Transverse colon (tissue), 4 donors: ENCODE measurements at regions of chr12 and their contacts with region 1.

Region 1: GRCh38 chr12:11839091-11839641 is 189.7 kb downstream of the ETV6 start:
- DNase-seq: peak; percentile 42
- H3K4me3 ChIP-seq: no peak overlapping the region
- H3K27ac ChIP-seq: peak overlapping the region; percentile 71 to 86 (median 82)
- H3K4me1 ChIP-seq: peaks cover 25 to 89% (median 53%) of the 10 kb centered on the region in 4 donors
- H3K27me3 ChIP-seq: no peaks in the 10 kb centered on the region
- CTCF ChIP-seq: no peak
- EP300 ChIP-seq: no peak
- POLR2A ChIP-seq: no peak

Region 2: GRCh38 chr12:11785712-11786111 is 53.5 kb before region 1 on chr12:
- in situ Hi-C with region 1: no loop called
- intact Hi-C with region 1: no loop called
- DNase-seq: no peak
- H3K4me3 ChIP-seq: no peak overlapping the region
- H3K27ac ChIP-seq: peak overlapping the region in 2 of 4 donors; percentile 18 to 27
- H3K4me1 ChIP-seq: peaks cover 0 to 32% (median 4%) of the 10 kb centered on the region in 4 donors
- H3K27me3 ChIP-seq: no peaks in the 10 kb centered on the region
- CTCF ChIP-seq: no peak
- EP300 ChIP-seq: no peak
- POLR2A ChIP-seq: no peak

Region 3: DNA sequence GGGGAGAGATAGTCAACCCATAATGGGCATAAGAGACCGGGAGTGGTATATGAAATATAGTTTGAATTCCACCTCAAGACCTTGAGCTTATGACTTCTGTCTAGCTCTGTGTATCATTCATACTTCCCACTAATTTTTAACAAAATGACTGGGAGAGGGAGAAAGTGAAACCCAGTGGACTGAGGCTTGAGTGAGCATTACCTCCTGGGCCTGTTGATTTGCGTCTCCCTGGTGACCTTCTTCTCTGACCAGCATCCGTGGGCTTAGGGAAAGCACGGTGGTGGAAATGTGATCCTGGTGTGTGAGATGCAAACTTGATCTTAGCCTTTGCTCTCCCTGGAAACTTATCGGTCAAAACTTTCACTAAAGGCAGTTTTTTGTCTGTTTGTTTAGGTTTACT is 23.6 kb after region 1 on chr12:
- in situ Hi-C with region 1: no loop called
- intact Hi-C with region 1: loop called (anchors 2 kb)
- DNase-seq: no peak
- H3K4me3 ChIP-seq: no peak overlapping the region
- H3K27ac ChIP-seq: peak overlapping the region; percentile 78 to 88 (median 82)
- H3K4me1 ChIP-seq: peaks cover 22 to 36% (median 28%) of the 10 kb centered on the region in 4 donors
- H3K27me3 ChIP-seq: no peaks in the 10 kb centered on the region
- CTCF ChIP-seq: no peak
- EP300 ChIP-seq: no peak
- POLR2A ChIP-seq: no peak